CD8-positive, alpha-beta T cell (primary cell): ENCODE measurements at regions of chr15 and their contacts with region 1.

Region 1: DNA sequence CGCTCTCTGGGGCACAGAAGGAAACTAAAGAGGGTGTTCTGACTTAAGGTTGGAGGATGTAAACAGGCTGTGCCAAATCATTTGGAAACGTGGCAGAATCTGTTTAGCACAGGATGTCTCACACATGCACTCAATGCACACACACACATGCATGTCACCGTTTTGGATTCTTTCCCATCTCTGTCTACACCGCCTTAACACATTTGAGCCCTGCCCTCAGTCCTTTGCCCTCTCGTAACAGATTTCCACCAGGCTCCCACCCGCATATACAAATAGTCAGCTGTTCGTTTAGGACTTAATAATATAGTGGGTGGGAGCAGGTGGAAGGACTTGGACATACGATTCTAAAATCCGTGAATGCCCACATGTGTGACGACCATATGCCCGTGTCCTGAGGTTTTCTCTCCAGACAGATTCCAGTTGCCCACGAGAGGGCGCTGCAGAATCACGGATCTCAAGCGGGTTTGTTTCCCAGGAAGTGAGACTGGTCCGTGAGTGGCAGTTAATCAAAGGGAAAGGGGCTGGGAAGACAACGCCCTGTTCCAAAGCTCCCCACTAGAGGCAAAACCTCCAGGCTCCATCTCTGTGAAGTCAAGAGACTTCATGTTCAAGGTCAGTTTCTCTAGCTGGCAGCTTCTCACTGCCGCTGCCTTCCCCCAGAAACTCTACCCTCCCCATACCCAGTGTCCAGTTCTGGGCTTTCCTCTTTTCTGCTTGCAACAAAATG is 44.5 kb downstream of the NOX5 start:
- DNase-seq: peak; percentile 43 to 87 (median 70)
- ATAC-seq: no peak
- H3K4me3 ChIP-seq: no peak overlapping the region
- H3K4me3 Mint-ChIP-seq: peak overlapping the region; percentile 3
- H3K27ac ChIP-seq: no peak overlapping the region
- H3K27ac Mint-ChIP-seq: no peak overlapping the region
- H3K4me1 ChIP-seq: peaks cover 16% of the 10 kb centered on the region
- H3K4me1 Mint-ChIP-seq: peaks cover 30% of the 10 kb centered on the region
- H3K27me3 ChIP-seq: no peaks in the 10 kb centered on the region
- H3K27me3 Mint-ChIP-seq: peaks cover 7% of the 10 kb centered on the region
- CTCF ChIP-seq: peak; percentile 88

Region 2: GRCh38 chr15:68962465-68962864 is 96.5 kb before region 1 on chr15:
- CTCF ChIA-PET with region 1: no interaction called
- POLR2A ChIA-PET with region 1: no interaction called
- intact Hi-C with region 1: no loop called
- DNase-seq: no peak
- ATAC-seq: no peak
- H3K4me3 ChIP-seq: no peak overlapping the region
- H3K4me3 Mint-ChIP-seq: no peak overlapping the region
- H3K27ac ChIP-seq: no peak overlapping the region
- H3K27ac Mint-ChIP-seq: no peak overlapping the region
- H3K4me1 ChIP-seq: no peaks in the 10 kb centered on the region
- H3K4me1 Mint-ChIP-seq: no peaks in the 10 kb centered on the region
- H3K27me3 ChIP-seq: no peaks in the 10 kb centered on the region
- H3K27me3 Mint-ChIP-seq: peaks cover 16% of the 10 kb centered on the region
- CTCF ChIP-seq: no peak

Region 3: GRCh38 chr15:69045808-69046207 is 13.2 kb before region 1 on chr15:
- CTCF ChIA-PET with region 1: interaction called, 15 read pairs
- POLR2A ChIA-PET with region 1: no interaction called
- intact Hi-C with region 1: no loop called
- DNase-seq: no peak
- ATAC-seq: no peak
- H3K4me3 ChIP-seq: no peak overlapping the region
- H3K4me3 Mint-ChIP-seq: no peak overlapping the region
- H3K27ac ChIP-seq: no peak overlapping the region
- H3K27ac Mint-ChIP-seq: no peak overlapping the region
- H3K4me1 ChIP-seq: no peaks in the 10 kb centered on the region
- H3K4me1 Mint-ChIP-seq: no peaks in the 10 kb centered on the region
- H3K27me3 ChIP-seq: no peaks in the 10 kb centered on the region
- H3K27me3 Mint-ChIP-seq: peaks cover 5% of the 10 kb centered on the region
- CTCF ChIP-seq: no peak

Region 4: GRCh38 chr15:69160141-69160993 is 101.4 kb after region 1 on chr15 and contains the start of gene GLCE:
- CTCF ChIA-PET with region 1: interaction called, 8 read pairs
- POLR2A ChIA-PET with region 1: no interaction called
- intact Hi-C with region 1: loop called in 1 of 2 experiments (anchors 5 kb)
- DNase-seq: peak; percentile 85 to 96 (median 92)
- ATAC-seq: peak; percentile 93
- H3K4me3 ChIP-seq: peak within 1 kb of the TSS; percentile 73 to 91
- H3K4me3 Mint-ChIP-seq: peak within 1 kb of the TSS; percentile 96
- H3K27ac ChIP-seq: peak within 1 kb of the TSS; percentile 51 to 58
- H3K27ac Mint-ChIP-seq: peak within 1 kb of the TSS; percentile 89
- H3K4me1 ChIP-seq: peaks cover 12% of the 10 kb centered on the region
- H3K4me1 Mint-ChIP-seq: peaks cover 21% of the 10 kb centered on the region
- H3K27me3 ChIP-seq: no peaks in the 10 kb centered on the region
- H3K27me3 Mint-ChIP-seq: peaks cover 6% of the 10 kb centered on the region
- CTCF ChIP-seq: no peak
- total RNA-seq, gene GLCE: 4.1 to 4.2 TPM

Region 5: DNA sequence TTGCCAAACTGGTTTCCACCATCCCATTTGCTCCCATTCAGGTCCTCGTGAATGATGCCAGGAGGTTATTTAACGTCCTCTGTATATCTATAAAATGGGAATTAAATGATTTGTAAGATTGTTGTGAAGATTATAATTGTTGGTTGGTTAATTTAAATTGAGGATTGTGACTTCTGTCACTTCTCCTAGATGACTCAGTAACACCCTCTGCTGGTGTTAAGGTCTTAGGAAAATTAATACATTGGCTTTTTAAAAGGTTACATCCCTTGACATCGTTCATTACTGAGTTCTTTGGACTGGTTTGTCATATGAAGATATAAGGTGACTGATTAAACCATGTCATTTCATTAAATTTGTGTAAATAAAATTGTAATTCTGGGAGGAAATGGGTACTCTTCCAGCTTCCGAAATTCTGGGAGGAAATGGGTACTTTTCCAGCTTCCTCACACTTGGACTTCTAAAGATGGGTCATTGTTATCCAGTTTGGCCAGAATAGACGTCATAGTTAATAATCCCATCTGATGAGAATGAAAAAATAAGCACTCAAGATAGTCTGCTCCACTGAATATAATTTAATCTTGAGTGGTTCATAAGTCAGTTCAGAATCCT is 206.5 kb after region 1 on chr15:
- CTCF ChIA-PET with region 1: interaction called, 11 read pairs
- POLR2A ChIA-PET with region 1: no interaction called
- intact Hi-C with region 1: loop called in 1 of 2 experiments (anchors 1 kb)
- DNase-seq: peak in 2 of 9 experiments; percentile 26 to 42
- ATAC-seq: no peak
- H3K4me3 ChIP-seq: no peak overlapping the region
- H3K4me3 Mint-ChIP-seq: no peak overlapping the region
- H3K27ac ChIP-seq: no peak overlapping the region
- H3K27ac Mint-ChIP-seq: no peak overlapping the region
- H3K4me1 ChIP-seq: no peaks in the 10 kb centered on the region
- H3K4me1 Mint-ChIP-seq: no peaks in the 10 kb centered on the region
- H3K27me3 ChIP-seq: no peaks in the 10 kb centered on the region
- H3K27me3 Mint-ChIP-seq: no peaks in the 10 kb centered on the region
- CTCF ChIP-seq: peak; percentile 30

Region 6: GRCh38 chr15:69394556-69395282 is 335.7 kb after region 1 on chr15:
- CTCF ChIA-PET with region 1: interaction called, 112 read pairs
- POLR2A ChIA-PET with region 1: no interaction called
- intact Hi-C with region 1: loop called in 1 of 2 experiments (anchors 1 kb)
- DNase-seq: peak; percentile 66 to 90 (median 82)
- ATAC-seq: peak; percentile 99
- H3K4me3 ChIP-seq: no peak overlapping the region
- H3K4me3 Mint-ChIP-seq: no peak overlapping the region
- H3K27ac ChIP-seq: no peak overlapping the region
- H3K27ac Mint-ChIP-seq: no peak overlapping the region
- H3K4me1 ChIP-seq: peaks cover 10% of the 10 kb centered on the region
- H3K4me1 Mint-ChIP-seq: peaks cover 12% of the 10 kb centered on the region
- H3K27me3 ChIP-seq: no peaks in the 10 kb centered on the region
- H3K27me3 Mint-ChIP-seq: peaks cover 4% of the 10 kb centered on the region
- CTCF ChIP-seq: peak; percentile 96